ENCODE measurements at regions of chr7 and their contacts with region 1.

Region 1: DNA sequence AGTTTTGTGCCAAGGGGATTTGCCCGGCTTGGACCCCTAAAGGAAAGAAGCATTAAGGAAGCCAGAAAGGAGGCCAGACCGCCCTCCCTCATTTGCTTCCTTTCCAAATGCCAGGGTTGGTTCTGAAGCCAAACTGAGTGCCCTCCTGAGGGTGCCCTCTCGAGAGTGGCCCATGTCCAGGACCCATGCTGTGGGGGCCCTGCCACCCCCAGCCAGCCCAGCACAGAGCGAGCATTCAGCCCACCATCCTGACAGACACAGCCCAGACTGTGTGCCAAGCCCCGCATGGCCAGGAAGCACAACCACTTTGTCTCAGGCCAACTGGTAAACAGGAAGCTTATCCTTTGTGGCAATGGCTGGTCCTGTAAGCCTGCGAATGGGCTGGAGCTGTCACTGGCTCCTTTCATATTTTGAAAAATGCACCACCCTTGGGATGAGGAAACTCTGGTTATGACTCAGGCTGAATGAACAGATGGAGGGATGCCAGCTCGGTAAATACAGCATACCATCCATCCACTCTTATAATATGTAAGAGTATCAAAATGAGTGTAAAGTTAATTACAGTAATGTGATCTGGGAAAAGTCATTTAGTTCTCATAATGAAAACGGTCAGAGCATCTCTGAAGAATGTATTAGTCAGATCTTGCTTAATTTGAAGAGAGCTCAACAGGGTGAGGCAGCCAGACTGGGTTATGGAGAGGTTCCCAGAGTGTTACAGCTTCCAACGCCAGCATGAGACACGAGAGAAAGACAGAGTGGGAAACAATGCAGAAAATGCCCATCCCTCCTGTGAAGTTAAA is 65.0 kb downstream of the STK17A start:
- DNase-seq: peak in 6 of 35 experiments; percentile 21 to 61 (median 48)
- ATAC-seq: peak; percentile 2 to 17 (median 6)
- H3K4me3 ChIP-seq: peak overlapping the region; percentile 51 to 53
- H3K4me3 Mint-ChIP-seq: peak overlapping the region; percentile 69 to 78 (median 76)
- H3K27ac ChIP-seq: peak overlapping the region; percentile 95
- H3K27ac Mint-ChIP-seq: peak overlapping the region; percentile 99 to 100
- H3K4me1 ChIP-seq: peaks cover 72 to 97% of the 10 kb centered on the region in 2 experiments
- H3K4me1 Mint-ChIP-seq: peaks cover 96 to 99% (median 97%) of the 10 kb centered on the region in 3 donors
- H3K27me3 ChIP-seq: no peaks in the 10 kb centered on the region
- H3K27me3 Mint-ChIP-seq: no peaks in the 10 kb centered on the region

Region 2: DNA sequence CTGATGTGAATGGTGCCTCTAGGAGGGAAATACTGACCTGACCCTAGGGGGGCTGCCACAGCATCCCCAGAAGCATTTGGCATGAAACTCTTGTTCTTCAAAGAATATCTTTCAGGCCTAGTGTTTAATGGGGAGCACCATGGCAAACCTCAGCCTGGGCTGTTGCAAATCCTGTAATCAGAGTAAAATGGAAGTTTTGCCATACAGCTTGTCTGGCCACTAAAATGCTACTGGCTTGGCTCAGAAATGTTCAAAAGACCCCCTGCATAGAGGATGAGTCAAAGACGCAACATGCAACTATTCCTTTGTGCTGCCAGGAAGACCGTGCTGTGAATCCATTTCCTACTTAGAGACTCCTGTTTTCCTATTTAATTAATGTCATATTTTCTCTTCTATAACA is 508.7 kb before region 1 on chr7:
- CTCF ChIA-PET with region 1: no interaction called
- POLR2A ChIA-PET with region 1: no interaction called
- DNase-seq: no peak
- ATAC-seq: no peak
- H3K4me3 ChIP-seq: no peak overlapping the region
- H3K4me3 Mint-ChIP-seq: no peak overlapping the region
- H3K27ac ChIP-seq: no peak overlapping the region
- H3K27ac Mint-ChIP-seq: no peak overlapping the region
- H3K4me1 ChIP-seq: no peaks in the 10 kb centered on the region
- H3K4me1 Mint-ChIP-seq: no peaks in the 10 kb centered on the region
- H3K27me3 ChIP-seq: peaks cover 0 to 11% of the 10 kb centered on the region in 2 experiments
- H3K27me3 Mint-ChIP-seq: peaks cover 24 to 42% of the 10 kb centered on the region in 2 donors

Region 3: DNA sequence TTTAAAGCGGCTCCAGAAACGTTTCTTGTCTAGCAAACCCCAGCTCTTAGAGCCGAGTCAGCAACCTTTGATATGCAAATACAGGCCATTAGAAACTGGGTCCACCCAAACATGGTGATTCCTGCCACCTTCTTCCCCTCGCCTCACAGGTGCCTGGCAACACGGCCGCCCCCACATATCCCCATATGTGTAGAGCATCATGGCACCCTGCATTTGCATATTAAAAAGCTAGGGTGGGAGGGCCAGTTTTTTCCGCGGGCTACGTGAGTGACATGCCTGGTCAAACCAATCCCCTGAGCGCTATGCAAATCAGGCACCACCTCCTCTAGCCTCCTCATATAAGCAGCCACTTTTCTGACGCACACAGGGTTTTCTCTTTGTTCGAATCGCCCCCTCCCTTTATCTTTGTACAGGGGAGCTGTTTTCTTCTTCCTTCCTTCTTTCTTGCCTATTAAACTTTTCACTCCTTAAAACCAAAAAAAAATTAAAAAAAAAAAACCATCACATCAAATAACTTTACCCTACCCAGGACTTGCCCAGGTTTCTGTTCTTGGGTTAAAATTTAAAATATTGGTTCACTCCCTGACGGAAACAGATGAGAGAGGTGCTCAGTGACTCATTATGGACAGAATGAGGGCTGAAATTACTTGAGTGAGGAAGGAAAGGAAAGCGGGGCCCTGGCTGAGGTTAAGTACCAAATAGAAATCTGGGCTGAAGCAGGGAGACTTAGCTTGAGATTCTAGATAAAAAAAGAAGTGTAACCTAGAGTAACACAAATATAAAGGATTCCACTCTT is 21.6 kb after region 1 on chr7:
- CTCF ChIA-PET with region 1: interaction called in 1 of 2 experiments, 11 read pairs
- POLR2A ChIA-PET with region 1: interaction called in 1 of 2 experiments, 5 read pairs
- DNase-seq: peak in 34 of 35 experiments; percentile 48 to 82 (median 64)
- ATAC-seq: peak; percentile 68 to 87 (median 74)
- H3K4me3 ChIP-seq: peak overlapping the region in 1 of 2 donors; percentile 22
- H3K4me3 Mint-ChIP-seq: peak overlapping the region; percentile 56 to 77 (median 73)
- H3K27ac ChIP-seq: peak overlapping the region; percentile 79
- H3K27ac Mint-ChIP-seq: peak overlapping the region; percentile 87 to 95
- H3K4me1 ChIP-seq: peaks cover 18 to 20% of the 10 kb centered on the region in 2 experiments
- H3K4me1 Mint-ChIP-seq: peaks cover 83 to 85% (median 85%) of the 10 kb centered on the region in 3 donors
- H3K27me3 ChIP-seq: no peaks in the 10 kb centered on the region
- H3K27me3 Mint-ChIP-seq: no peaks in the 10 kb centered on the region